GM12878 (cell line): ENCODE measurements at regions of chr5 and their contacts with region 1.

Region 1: GRCh38 chr5:157026789-157027424 is 32.0 kb downstream of the HAVCR1 start:
- DNase-seq: no peak
- ATAC-seq: peak; percentile 48
- H3K4me3 ChIP-seq: no peak overlapping the region
- H3K27ac ChIP-seq: no peak overlapping the region
- H3K4me1 ChIP-seq: peaks cover 6% of the 10 kb centered on the region
- H3K27me3 ChIP-seq: no peaks in the 10 kb centered on the region
- CTCF ChIP-seq: peak; percentile 67 to 75 (median 69)
- EP300 ChIP-seq: no peak
- POLR2A ChIP-seq: no peak
- RAD21 ChIP-seq: peak; percentile 70

Region 2: GRCh38 chr5:156835905-156836304 is 191.0 kb before region 1 on chr5:
- CTCF ChIA-PET with region 1: no interaction called
- POLR2A ChIA-PET with region 1: no interaction called
- RAD21 ChIA-PET with region 1: no interaction called
- SMC1A ChIA-PET with region 1: no interaction called
- in situ Hi-C with region 1: no loop called
- intact Hi-C with region 1: loop called (anchors 5 kb)
- DNase-seq: no peak
- ATAC-seq: peak; percentile 88
- H3K4me3 ChIP-seq: no peak overlapping the region
- H3K27ac ChIP-seq: no peak overlapping the region
- H3K4me1 ChIP-seq: no peaks in the 10 kb centered on the region; the same call in 1 of the 2 replicates
- H3K27me3 ChIP-seq: no peaks in the 10 kb centered on the region
- CTCF ChIP-seq: peak; percentile 32 to 47 (median 39); a peak in 5 of 6 replicates
- EP300 ChIP-seq: no peak
- POLR2A ChIP-seq: no peak
- RAD21 ChIP-seq: peak; percentile 43

Region 3: GRCh38 chr5:156893517-156893916 is 133.4 kb before region 1 on chr5:
- CTCF ChIA-PET with region 1: interaction called, 6 read pairs
- POLR2A ChIA-PET with region 1: interaction called, 3 read pairs
- RAD21 ChIA-PET with region 1: no interaction called
- SMC1A ChIA-PET with region 1: interaction called, 13 read pairs
- in situ Hi-C with region 1: no loop called
- intact Hi-C with region 1: loop called (anchors 1 kb)
- DNase-seq: peak; percentile 52
- ATAC-seq: peak; percentile 82
- H3K4me3 ChIP-seq: no peak overlapping the region
- H3K27ac ChIP-seq: peak overlapping the region; percentile 47; the same call in 1 of the 2 replicates
- H3K4me1 ChIP-seq: peaks cover 23% of the 10 kb centered on the region
- H3K27me3 ChIP-seq: no peaks in the 10 kb centered on the region
- CTCF ChIP-seq: no peak
- EP300 ChIP-seq: peak in 1 of 2 experiments; percentile 51; a peak in 1 of 4 replicates
- POLR2A ChIP-seq: no peak
- RAD21 ChIP-seq: no peak

Region 4: GRCh38 chr5:156942064-156942463 is 84.8 kb before region 1 on chr5:
- CTCF ChIA-PET with region 1: interaction called, 49 read pairs
- POLR2A ChIA-PET with region 1: no interaction called
- RAD21 ChIA-PET with region 1: interaction called, 6 read pairs
- SMC1A ChIA-PET with region 1: interaction called, 11 read pairs
- in situ Hi-C with region 1: no loop called
- intact Hi-C with region 1: loop called (anchors 5 kb)
- DNase-seq: no peak
- ATAC-seq: peak; percentile 95
- H3K4me3 ChIP-seq: peak overlapping the region; percentile 8; the same call in 1 of the 2 replicates
- H3K27ac ChIP-seq: peak overlapping the region; percentile 52
- H3K4me1 ChIP-seq: peaks cover 17% of the 10 kb centered on the region
- H3K27me3 ChIP-seq: no peaks in the 10 kb centered on the region
- CTCF ChIP-seq: no peak
- EP300 ChIP-seq: no peak
- POLR2A ChIP-seq: no peak
- RAD21 ChIP-seq: no peak

Region 5: DNA sequence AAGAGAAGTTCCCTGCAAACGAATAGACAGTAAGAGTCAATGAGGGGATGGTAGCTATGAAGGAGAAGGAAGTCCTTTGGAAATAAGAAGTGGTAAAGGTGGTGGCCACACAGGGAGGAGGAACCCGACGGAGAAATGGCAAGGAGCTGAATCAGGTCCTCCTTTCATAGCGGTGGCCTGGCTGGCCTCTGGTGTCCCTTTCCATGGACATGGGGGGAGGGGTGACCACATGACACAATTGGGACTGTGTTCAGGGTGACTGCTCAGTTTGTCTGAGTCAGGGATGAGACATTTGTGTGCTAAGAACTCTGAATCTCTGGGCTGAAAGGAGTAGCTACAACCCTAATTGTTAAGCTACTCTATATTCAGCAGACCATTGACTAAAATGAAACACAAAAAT is 35.2 kb before region 1 on chr5:
- CTCF ChIA-PET with region 1: no interaction called
- POLR2A ChIA-PET with region 1: no interaction called
- RAD21 ChIA-PET with region 1: no interaction called
- SMC1A ChIA-PET with region 1: no interaction called
- in situ Hi-C with region 1: no loop called
- intact Hi-C with region 1: no loop called
- DNase-seq: no peak
- ATAC-seq: no peak
- H3K4me3 ChIP-seq: no peak overlapping the region
- H3K27ac ChIP-seq: no peak overlapping the region
- H3K4me1 ChIP-seq: no peaks in the 10 kb centered on the region
- H3K27me3 ChIP-seq: no peaks in the 10 kb centered on the region
- CTCF ChIP-seq: no peak
- EP300 ChIP-seq: no peak
- POLR2A ChIP-seq: no peak
- RAD21 ChIP-seq: no peak

Region 6: GRCh38 chr5:157076558-157076957 is 49.7 kb after region 1 on chr5:
- CTCF ChIA-PET with region 1: interaction called, 8 read pairs
- POLR2A ChIA-PET with region 1: no interaction called
- RAD21 ChIA-PET with region 1: interaction called, 7 read pairs
- SMC1A ChIA-PET with region 1: interaction called, 4 read pairs
- in situ Hi-C with region 1: no loop called
- intact Hi-C with region 1: loop called (anchors 2 kb)
- DNase-seq: no peak
- ATAC-seq: peak; percentile 69
- H3K4me3 ChIP-seq: no peak overlapping the region
- H3K27ac ChIP-seq: no peak overlapping the region
- H3K4me1 ChIP-seq: peaks cover 17% of the 10 kb centered on the region
- H3K27me3 ChIP-seq: no peaks in the 10 kb centered on the region
- CTCF ChIP-seq: no peak
- EP300 ChIP-seq: no peak
- POLR2A ChIP-seq: no peak
- RAD21 ChIP-seq: no peak

Region 7: DNA sequence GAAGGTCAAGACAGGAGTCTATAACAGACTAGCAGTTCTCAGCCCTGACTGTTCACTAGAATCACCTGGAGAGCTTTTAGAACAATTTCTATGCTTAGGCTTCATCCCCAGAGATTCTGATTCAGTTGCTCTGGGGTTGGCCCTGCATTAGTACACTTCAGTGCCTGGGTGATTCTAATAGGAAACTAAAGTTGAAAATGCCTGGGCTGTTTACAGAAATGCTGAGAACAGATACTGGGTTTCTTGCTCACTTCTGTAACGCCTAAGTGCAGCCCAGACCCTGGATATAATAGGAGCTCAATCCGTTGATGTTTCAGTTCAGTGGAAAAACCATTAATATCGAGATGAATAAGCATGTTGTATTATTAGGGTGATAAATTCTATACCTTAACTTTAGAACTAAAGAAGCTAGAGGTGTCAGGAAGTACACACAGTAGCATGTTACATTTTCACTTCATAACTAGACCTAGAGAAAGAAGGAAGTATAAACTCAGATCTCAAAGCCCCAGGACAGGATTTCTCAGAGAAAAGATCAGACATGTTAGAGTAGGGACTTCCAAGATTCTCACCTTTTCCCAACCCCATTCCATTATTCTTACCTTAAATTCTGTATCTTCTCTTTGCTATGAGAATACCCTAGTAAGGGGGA is 61.6 kb after region 1 on chr5:
- CTCF ChIA-PET with region 1: no interaction called
- POLR2A ChIA-PET with region 1: no interaction called
- RAD21 ChIA-PET with region 1: no interaction called
- SMC1A ChIA-PET with region 1: no interaction called
- in situ Hi-C with region 1: no loop called
- intact Hi-C with region 1: no loop called
- DNase-seq: no peak
- ATAC-seq: peak; percentile 74
- H3K4me3 ChIP-seq: no peak overlapping the region
- H3K27ac ChIP-seq: peak overlapping the region; percentile 67
- H3K4me1 ChIP-seq: peaks cover 7% of the 10 kb centered on the region
- H3K27me3 ChIP-seq: no peaks in the 10 kb centered on the region
- CTCF ChIP-seq: no peak
- EP300 ChIP-seq: no peak
- POLR2A ChIP-seq: no peak
- RAD21 ChIP-seq: no peak